BJ (cell line): ENCODE measurements at regions of chr2 and their contacts with region 1.

Region 1: DNA sequence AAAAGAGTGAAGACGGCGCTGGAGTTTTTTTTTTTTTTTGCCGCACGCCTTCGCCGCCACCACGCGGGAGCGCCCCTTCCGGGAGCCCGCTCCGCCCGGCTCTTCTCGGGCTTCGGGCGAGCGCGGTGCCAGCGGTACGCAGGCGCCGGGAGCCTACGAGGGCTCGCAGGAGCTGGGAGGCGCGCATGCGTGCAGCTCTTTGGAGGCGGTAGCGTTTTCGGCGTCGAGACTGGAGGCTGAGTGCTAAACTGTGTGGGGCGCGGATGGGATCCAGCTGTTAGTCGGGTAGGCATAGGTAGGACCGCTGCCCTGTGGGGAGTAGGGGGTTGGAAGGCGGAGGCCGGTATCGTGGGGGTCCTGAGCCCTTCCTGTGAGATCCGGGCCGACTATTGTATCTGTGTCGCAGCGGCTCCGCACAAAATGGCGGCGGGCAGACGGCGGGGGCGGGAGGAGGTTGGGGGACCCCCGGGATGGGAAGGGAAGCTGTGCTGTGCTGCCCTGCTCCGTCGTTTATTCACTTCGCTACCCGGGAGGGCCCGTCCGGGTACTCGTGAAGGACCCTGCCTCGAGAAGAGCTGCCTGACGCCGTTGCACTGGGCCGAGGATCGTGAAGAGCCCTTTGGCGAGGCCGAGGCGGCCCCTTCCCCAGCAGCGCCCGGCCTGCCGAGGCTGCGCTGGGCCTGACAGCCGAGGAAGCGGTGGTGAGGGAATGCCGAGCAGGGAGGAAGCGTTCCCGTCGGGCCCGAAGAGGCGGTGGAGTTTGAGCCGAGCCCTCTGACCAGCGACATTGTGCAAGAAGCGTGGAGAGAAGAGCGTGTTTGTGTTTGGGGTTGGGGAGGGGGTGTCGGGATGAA is at the start of gene ZNF638:
- DNase-seq: peak; percentile 50
- H3K4me3 ChIP-seq: peak within 1 kb of the TSS; percentile 90
- H3K27me3 ChIP-seq: no peaks in the 10 kb centered on the region
- CTCF ChIP-seq: peak; percentile 73
- polyA plus RNA-seq, gene ZNF638: 44.8 and 75.2 TPM in 2 replicates

Region 2: DNA sequence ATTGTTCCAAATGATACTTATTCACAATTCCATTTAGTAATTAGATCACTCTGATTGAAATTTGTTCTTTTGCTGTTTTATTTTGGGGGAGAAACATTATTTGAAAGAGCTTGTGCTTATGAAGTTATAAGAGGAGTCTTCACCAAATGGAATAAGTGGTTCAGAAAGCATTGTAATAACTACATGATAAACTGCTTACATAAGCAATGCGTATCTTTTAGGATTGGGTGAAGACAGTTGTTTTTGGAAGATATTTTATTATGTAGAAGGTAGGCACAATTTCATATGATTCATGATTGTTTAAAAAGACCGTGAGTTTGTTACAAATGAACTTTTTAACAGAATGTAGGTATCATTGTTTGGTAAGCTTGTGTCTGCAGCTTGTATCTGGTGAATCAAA is 14.3 kb after region 1 on chr2:
- CTCF ChIA-PET with region 1: interaction called, 15 read pairs
- POLR2A ChIA-PET with region 1: no interaction called
- DNase-seq: no peak
- H3K4me3 ChIP-seq: no peak overlapping the region
- H3K27me3 ChIP-seq: no peaks in the 10 kb centered on the region
- CTCF ChIP-seq: no peak

Region 3: DNA sequence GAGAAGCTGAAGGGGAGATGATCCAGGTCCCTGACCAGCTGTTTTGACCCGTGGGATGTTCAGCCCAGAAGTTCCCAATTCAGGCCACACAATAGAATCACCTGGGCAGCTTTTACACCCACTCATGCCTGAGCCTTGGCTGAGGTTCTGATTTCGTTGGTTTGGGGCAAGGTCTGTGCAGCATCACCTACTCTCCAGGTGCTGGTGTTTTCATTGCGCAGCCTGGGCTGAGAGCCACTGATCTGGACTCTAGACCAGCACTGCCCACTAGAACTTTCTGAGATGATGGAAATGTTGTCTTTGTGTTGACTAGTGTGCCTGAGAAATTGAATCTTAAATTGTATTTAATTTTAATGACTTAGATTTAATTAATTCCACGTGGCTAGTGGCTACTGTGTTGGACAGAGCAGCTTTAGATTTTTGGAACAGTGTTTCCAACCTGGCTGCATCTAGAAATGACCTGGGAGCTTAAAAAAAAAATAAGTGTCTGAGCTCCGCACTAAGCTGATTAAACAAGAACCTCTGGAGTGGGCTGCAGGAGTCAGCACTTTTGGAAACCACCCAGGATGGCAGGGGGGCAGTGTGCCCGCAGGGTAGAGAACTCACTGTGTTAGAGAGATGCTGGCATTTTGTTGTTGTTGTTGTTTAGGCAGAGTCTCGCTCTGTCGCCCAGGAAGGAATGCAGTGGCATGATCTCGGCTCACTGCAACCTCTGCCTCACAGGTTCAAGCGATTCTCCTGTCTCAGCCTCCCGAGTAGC is 155.3 kb after region 1 on chr2:
- CTCF ChIA-PET with region 1: no interaction called
- POLR2A ChIA-PET with region 1: interaction called, 10 read pairs
- DNase-seq: no peak
- H3K4me3 ChIP-seq: no peak overlapping the region
- H3K27me3 ChIP-seq: peaks cover 8% of the 10 kb centered on the region
- CTCF ChIP-seq: no peak